Mammary epithelial cell (primary cell): ENCODE measurements at regions of chr11 and their contacts with region 1.

Region 1: DNA sequence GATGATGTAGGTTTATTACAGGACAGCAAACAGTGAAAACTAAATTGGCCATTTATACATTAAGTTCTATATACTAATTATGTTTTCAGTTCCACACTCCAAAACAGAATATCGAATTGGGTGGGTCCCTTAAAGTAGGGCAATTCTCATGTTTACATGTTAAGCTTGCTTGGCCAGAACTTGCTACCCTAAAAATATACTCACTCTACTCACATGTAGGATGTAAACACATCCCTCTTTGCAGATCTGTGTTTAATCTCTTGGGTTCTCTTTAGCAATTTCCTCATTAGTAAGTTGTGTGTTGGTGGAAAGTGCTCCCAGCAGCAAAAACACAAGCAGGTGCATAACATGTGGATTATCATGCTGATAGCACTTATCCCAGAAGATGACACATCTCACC is 22.6 kb upstream of the DDX6 start:
- DNase-seq: no peak
- H3K4me3 ChIP-seq: no peak overlapping the region
- H3K27ac ChIP-seq: no peak overlapping the region
- H3K4me1 ChIP-seq: no peaks in the 10 kb centered on the region
- H3K27me3 ChIP-seq: no peaks in the 10 kb centered on the region
- CTCF ChIP-seq: no peak

Region 2: GRCh38 chr11:118705111-118705741 is 108.3 kb before region 1 on chr11:
- CTCF ChIA-PET with region 1: no interaction called
- dilution Hi-C with region 1: loop called (anchors 5 kb)
- in situ Hi-C with region 1: no loop called
- intact Hi-C with region 1: no loop called
- DNase-seq: no peak
- H3K4me3 ChIP-seq: no peak overlapping the region
- H3K27ac ChIP-seq: no peak overlapping the region
- H3K4me1 ChIP-seq: no peaks in the 10 kb centered on the region
- H3K27me3 ChIP-seq: no peaks in the 10 kb centered on the region
- CTCF ChIP-seq: no peak

Region 3: DNA sequence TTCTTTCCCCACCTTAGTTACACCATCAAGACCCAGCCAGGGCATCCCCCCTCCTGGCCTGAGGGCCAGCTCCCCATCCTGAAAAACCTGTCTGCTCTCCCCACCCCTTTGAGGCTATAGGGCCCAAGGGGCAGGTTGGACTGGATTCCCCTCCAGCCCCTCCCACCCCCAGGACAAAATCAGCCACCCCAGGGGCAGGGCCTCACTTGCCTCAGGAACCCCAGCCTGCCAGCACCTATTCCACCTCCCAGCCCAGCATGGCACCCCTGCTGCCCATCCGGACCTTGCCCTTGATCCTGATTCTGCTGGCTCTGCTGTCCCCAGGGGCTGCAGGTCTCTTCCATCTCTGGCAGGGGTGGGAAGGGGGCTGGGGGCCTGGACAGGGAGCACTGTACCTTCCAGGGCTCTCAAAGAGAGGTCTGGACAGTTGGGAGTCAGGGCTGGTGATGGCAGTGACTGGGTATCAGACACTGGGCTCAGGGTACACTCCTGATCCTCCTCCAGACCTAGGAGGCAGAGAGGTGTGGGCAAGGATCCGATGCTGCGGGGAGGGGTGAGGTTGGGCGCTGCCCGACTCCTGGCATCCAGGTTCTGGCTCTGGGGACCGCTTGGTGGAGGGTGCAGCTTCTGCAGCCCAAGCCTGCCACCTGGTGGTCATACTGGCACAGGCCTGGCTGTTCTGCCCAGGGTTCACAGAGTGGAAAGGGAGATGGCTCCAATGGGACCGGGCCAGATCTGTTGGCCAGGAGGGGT is 142.7 kb after region 1 on chr11 and contains the start of gene UPK2:
- CTCF ChIA-PET with region 1: no interaction called
- dilution Hi-C with region 1: no loop called
- in situ Hi-C with region 1: no loop called
- intact Hi-C with region 1: no loop called
- DNase-seq: peak; percentile 72
- H3K4me3 ChIP-seq: no peak within 1 kb of the TSS
- H3K27ac ChIP-seq: no peak within 1 kb of the TSS
- H3K4me1 ChIP-seq: peaks cover 2% of the 10 kb centered on the region
- H3K27me3 ChIP-seq: no peaks in the 10 kb centered on the region
- CTCF ChIP-seq: peak; percentile 95 to 98
- total RNA-seq, gene UPK2: 0.45 TPM in 1 of 2 donors, not detected in the other